Gastrocnemius medialis (tissue), 4 donors: ENCODE measurements at regions of chr18 and their contacts with region 1.

Region 1: GRCh38 chr18:13726232-13726971 is at the starts of genes FAM210A and RNMT:
- DNase-seq: peak; percentile 93 to 94
- ATAC-seq: peak; percentile 93 to 96
- H3K4me3 ChIP-seq: peak within 1 kb of the TSS; percentile 74 to 88 (median 81)
- H3K27ac ChIP-seq: peak within 1 kb of the TSS; percentile 93 to 98 (median 96)
- H3K4me1 ChIP-seq: peaks cover 25 to 34% of the 10 kb centered on the region in 2 donors
- H3K27me3 ChIP-seq: no peaks in the 10 kb centered on the region
- CTCF ChIP-seq: peak in 1 of 5 experiments; percentile 22
- POLR2A ChIP-seq: peak; percentile 83 to 88
- total RNA-seq, gene FAM210A: 7.8 to 23.1 (median 16.3) TPM
- total RNA-seq, gene RNMT: 12.9 to 24.1 (median 18.6) TPM

Region 2: DNA sequence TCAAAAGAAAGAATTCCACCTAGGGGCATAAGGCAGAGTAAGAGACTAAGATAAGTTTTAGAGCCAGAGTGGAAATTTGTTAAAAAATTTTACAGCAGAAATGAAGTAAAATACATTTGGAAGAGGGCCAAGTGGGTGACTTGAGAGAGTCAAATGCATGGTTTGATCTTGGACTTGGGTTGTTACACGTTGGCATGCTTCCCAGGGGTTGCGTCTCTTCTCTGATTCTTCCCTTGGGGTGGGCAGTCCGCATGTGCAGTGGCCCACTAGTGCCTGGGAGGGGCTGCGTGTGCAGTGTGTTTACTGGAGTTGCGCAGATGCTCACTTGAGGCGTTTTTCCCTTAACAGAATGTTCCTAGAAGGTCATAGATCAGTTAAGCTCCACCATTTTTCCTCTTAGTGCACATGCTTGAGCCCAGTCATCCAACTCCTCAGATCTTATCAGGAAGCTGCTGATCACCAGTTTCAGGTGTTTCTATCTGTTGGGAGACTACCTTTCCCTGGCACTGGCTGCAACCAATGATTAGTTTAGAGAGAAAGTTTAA is 765.5 kb before region 1 on chr18:
- in situ Hi-C with region 1: loop called in 1 of 4 experiments (anchors 25 kb)
- intact Hi-C with region 1: no loop called
- DNase-seq: no peak
- ATAC-seq: no peak
- H3K4me3 ChIP-seq: no peak overlapping the region
- H3K27ac ChIP-seq: no peak overlapping the region
- H3K4me1 ChIP-seq: no peaks in the 10 kb centered on the region
- H3K27me3 ChIP-seq: no peaks in the 10 kb centered on the region
- CTCF ChIP-seq: no peak
- POLR2A ChIP-seq: no peak

Region 3: GRCh38 chr18:13375302-13376255 is 350.8 kb before region 1 on chr18:
- in situ Hi-C with region 1: no loop called
- intact Hi-C with region 1: loop called (anchors 10 kb)
- DNase-seq: peak; percentile 28 to 38
- ATAC-seq: peak in 1 of 2 donors; percentile 41
- H3K4me3 ChIP-seq: no peak overlapping the region
- H3K27ac ChIP-seq: peak overlapping the region; percentile 14 to 35 (median 22)
- H3K4me1 ChIP-seq: peaks cover 44 to 46% of the 10 kb centered on the region in 2 donors
- H3K27me3 ChIP-seq: no peaks in the 10 kb centered on the region
- CTCF ChIP-seq: no peak
- POLR2A ChIP-seq: no peak

Region 4: DNA sequence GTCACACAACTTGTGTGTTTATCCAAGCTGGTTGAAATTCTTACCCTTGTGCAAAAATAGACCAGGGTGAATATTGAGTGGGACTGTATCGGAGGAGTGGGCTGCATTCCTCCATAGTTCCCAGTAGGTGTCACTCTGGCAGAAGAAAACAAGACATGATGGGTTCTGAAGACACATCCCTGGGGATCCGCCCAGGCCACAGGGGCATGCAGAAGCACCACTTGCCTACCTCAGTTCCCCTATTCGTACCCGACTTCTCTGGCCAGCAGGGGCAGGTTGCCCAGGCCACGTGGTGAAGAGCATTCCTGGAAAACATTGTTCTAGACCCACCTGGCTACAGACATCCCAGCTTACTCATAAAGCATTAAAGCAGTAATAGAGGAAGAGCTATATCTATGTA is 168.3 kb before region 1 on chr18:
- in situ Hi-C with region 1: loop called in 2 of 4 experiments (anchors 10 to 25 kb)
- intact Hi-C with region 1: loop called (anchors 2 kb)
- DNase-seq: no peak
- ATAC-seq: peak; percentile 62 to 73
- H3K4me3 ChIP-seq: no peak overlapping the region
- H3K27ac ChIP-seq: no peak overlapping the region
- H3K4me1 ChIP-seq: peaks cover 12 to 18% of the 10 kb centered on the region in 2 donors
- H3K27me3 ChIP-seq: no peaks in the 10 kb centered on the region
- CTCF ChIP-seq: peak; percentile 45 to 67 (median 54)
- POLR2A ChIP-seq: no peak

Region 5: GRCh38 chr18:13629841-13630715 is 96.3 kb before region 1 on chr18:
- in situ Hi-C with region 1: loop called in 1 of 4 experiments (anchors 25 kb)
- intact Hi-C with region 1: no loop called
- DNase-seq: no peak
- ATAC-seq: peak; percentile 85 to 87
- H3K4me3 ChIP-seq: no peak overlapping the region
- H3K27ac ChIP-seq: no peak overlapping the region
- H3K4me1 ChIP-seq: peaks cover 4% of the 10 kb centered on the region in 2 donors
- H3K27me3 ChIP-seq: no peaks in the 10 kb centered on the region
- CTCF ChIP-seq: peak; percentile 54 to 79 (median 72)
- POLR2A ChIP-seq: no peak

Region 6: GRCh38 chr18:13703899-13704298 is 22.5 kb before region 1 on chr18:
- in situ Hi-C with region 1: no loop called
- intact Hi-C with region 1: no loop called
- DNase-seq: no peak
- ATAC-seq: no peak
- H3K4me3 ChIP-seq: no peak overlapping the region
- H3K27ac ChIP-seq: no peak overlapping the region
- H3K4me1 ChIP-seq: no peaks in the 10 kb centered on the region
- H3K27me3 ChIP-seq: no peaks in the 10 kb centered on the region
- CTCF ChIP-seq: no peak
- POLR2A ChIP-seq: no peak

Region 7: GRCh38 chr18:13746633-13747032 is 20.2 kb after region 1 on chr18:
- in situ Hi-C with region 1: no loop called
- intact Hi-C with region 1: no loop called
- DNase-seq: no peak
- ATAC-seq: no peak
- H3K4me3 ChIP-seq: no peak overlapping the region
- H3K27ac ChIP-seq: no peak overlapping the region
- H3K4me1 ChIP-seq: no peaks in the 10 kb centered on the region
- H3K27me3 ChIP-seq: no peaks in the 10 kb centered on the region
- CTCF ChIP-seq: no peak
- POLR2A ChIP-seq: no peak

Region 8: DNA sequence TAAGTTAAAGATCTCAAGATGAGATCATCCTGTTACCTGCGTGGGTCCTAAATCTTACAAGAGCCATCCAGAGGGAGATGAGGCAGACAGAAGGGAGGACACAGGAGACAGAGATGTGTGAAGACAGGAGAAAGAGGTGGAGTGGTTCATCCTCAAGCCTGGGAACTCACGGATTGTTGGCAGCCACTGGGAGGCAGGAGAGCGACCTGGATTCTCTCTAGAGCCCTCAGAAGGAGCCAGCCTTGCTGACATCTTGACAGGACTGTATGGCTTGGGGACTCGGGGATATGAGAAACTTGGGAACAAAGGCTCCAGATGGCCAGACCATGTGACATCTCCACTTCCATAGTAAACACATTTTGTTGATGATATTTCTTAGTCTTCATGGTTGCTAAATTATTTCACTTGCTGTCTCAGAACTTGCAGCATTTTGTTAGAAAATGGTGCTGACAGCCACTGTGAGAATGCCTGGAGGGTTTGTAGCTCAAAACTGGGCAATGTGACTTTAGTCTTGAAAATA is 246.7 kb after region 1 on chr18:
- in situ Hi-C with region 1: no loop called
- intact Hi-C with region 1: no loop called
- DNase-seq: no peak
- ATAC-seq: no peak
- H3K4me3 ChIP-seq: no peak overlapping the region
- H3K27ac ChIP-seq: no peak overlapping the region
- H3K4me1 ChIP-seq: no peaks in the 10 kb centered on the region
- H3K27me3 ChIP-seq: no peaks in the 10 kb centered on the region
- CTCF ChIP-seq: no peak
- POLR2A ChIP-seq: no peak